Calu3 (cell line): ENCODE measurements at regions of chr3 and their contacts with region 1.

Region 1: GRCh38 chr3:4584456-4585249 is 91.5 kb downstream of the ITPR1 start:
- DNase-seq: no peak
- H3K4me3 Mint-ChIP-seq: peak overlapping the region; percentile 68
- H3K27ac Mint-ChIP-seq: peak overlapping the region; percentile 71
- H3K4me1 Mint-ChIP-seq: peaks cover 8% of the 10 kb centered on the region
- H3K27me3 Mint-ChIP-seq: no peaks in the 10 kb centered on the region
- CTCF ChIP-seq: no peak

Region 2: DNA sequence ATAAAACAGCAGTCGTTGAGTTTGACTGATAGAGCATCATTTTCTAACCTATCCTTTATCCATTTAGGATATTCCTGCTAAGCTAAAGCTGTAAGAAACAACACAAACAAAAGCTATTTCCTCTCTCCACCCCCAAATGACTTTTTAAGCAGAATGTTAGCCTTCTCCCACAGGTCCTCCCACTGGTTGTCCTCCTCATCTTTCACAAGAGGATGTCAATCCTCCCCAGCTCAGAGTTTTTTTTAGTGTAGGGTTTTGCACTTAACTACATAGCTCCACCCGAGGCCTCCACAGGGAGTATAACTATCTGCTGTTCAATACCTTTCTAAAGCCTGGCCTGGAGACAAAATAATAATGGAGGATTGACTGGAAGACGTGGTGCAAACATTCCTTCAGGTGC is 273.7 kb before region 1 on chr3:
- CTCF ChIA-PET with region 1: interaction called, 12 read pairs
- intact Hi-C with region 1: no loop called
- DNase-seq: no peak
- H3K4me3 Mint-ChIP-seq: no peak overlapping the region
- H3K27ac Mint-ChIP-seq: no peak overlapping the region
- H3K4me1 Mint-ChIP-seq: no peaks in the 10 kb centered on the region
- H3K27me3 Mint-ChIP-seq: no peaks in the 10 kb centered on the region
- CTCF ChIP-seq: no peak

Region 3: GRCh38 chr3:4599612-4600011 is 15.0 kb after region 1 on chr3:
- CTCF ChIA-PET with region 1: interaction called, 10 read pairs
- intact Hi-C with region 1: no loop called
- DNase-seq: no peak
- H3K4me3 Mint-ChIP-seq: no peak overlapping the region
- H3K27ac Mint-ChIP-seq: no peak overlapping the region
- H3K4me1 Mint-ChIP-seq: no peaks in the 10 kb centered on the region
- H3K27me3 Mint-ChIP-seq: no peaks in the 10 kb centered on the region
- CTCF ChIP-seq: no peak

Region 4: DNA sequence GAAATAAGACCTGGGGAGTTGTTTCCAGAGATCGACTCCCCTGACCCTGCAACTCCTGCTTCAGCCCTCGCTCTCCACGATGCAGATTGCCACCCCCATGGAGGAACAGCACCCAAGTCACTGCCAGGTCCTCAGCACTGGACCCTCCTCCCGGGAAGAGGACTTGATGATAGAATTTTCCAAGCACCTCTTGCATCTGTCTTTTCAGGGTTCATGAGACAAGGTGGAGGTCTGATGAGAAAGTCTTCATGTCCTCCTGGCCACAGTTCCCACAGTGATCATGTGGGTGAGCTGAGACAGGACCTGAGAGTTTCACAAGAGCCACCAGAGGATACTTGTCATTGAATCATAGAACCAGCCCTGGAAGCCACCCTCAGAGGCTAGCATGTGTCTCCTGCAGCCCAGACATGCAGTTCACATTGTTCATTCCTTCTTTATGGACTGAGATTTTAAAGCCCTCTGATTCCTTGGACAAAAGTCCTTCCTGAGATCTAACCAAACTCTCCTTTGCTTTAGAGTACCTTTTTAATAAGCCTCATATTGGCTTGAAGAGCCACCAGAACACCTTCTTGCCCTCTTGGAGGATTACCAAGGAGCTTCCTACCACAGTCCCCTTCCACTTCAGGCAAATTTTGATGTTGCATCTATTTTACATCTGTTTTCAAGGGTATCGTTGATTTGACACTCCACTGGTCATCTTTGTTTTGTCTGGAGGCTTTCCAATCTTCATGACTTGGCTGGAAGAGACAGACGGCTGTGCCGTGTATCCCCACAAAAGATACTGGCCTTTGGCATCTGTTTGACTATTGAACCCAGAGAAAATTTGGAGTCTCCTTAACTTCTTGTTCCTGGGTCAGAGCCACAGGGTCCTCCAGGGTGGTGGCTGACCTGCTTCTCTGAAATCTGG is 169.8 kb after region 1 on chr3:
- CTCF ChIA-PET with region 1: no interaction called
- intact Hi-C with region 1: no loop called
- DNase-seq: no peak
- H3K4me3 Mint-ChIP-seq: no peak overlapping the region
- H3K27ac Mint-ChIP-seq: no peak overlapping the region
- H3K4me1 Mint-ChIP-seq: peaks cover 48% of the 10 kb centered on the region
- H3K27me3 Mint-ChIP-seq: no peaks in the 10 kb centered on the region
- CTCF ChIP-seq: no peak